ENCODE measurements at regions of chr18 and their contacts with region 1.

Region 1: DNA sequence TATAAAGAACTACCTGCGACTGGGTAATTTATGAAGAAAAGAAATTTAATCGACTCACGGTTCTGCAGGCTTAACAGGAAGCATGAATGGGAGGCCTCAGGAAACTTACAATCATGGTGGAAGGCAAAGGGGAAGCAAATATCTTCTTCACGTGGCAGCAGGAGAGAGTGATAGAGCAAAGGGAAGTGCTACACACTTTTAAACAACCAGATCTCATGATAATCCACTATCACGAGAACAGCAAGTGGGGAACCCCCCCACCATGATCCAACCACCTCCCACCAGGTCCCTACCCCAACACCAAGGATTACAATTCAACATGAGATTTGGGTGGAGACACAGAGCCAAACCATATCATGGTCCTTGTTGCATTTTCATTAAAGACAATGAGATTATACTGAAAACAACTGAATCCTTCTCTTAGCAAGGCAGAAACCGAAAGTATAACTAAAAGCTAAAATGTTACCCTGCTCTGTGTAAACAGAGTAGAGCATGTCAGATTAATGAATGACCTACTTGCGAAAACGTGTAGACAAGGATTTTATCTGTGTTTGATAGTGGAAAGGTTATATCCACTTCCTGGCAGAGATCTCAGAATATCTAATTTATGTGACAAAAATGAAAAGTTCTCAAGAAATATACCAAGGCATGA is 60.1 kb upstream of the RBBP8 start:
- DNase-seq: no peak
- ATAC-seq: no peak
- H3K4me3 ChIP-seq: no peak overlapping the region
- H3K27ac ChIP-seq: no peak overlapping the region
- H3K4me1 ChIP-seq: peaks cover 6 to 10% of the 10 kb centered on the region in 2 experiments; a peak in 1 of 4 replicates
- H3K27me3 ChIP-seq: no peaks in the 10 kb centered on the region
- CTCF ChIP-seq: no peak
- POLR2A ChIP-seq: no peak
- RAD21 ChIP-seq: no peak

Region 2: DNA sequence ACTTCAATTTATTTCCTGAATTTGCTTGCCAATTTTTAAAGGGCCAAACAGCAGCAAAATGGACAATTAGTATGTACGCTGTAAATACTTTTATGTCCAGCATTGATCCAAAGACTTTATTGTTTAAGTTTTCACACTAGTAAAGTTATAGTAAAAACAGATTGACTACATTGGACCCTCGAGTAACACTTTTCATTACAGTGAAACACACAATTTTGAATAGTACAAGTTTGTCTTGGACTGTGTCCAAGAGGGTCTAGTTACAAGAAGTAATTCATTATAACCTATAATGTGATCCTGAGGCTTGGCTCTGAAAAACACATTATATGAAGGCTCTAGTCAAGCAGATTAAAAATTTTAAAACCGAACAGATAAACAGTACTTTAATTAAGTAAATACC is 48.7 kb after region 1 on chr18:
- CTCF ChIA-PET with region 1: no interaction called
- POLR2A ChIA-PET with region 1: no interaction called
- RAD21 ChIA-PET with region 1: no interaction called
- intact Hi-C with region 1: loop called (anchors 10 kb)
- DNase-seq: no peak
- ATAC-seq: no peak
- H3K4me3 ChIP-seq: no peak overlapping the region
- H3K27ac ChIP-seq: no peak overlapping the region
- H3K4me1 ChIP-seq: peaks cover 3 to 15% of the 10 kb centered on the region in 2 experiments; a peak in 3 of 4 replicates
- H3K27me3 ChIP-seq: no peaks in the 10 kb centered on the region
- CTCF ChIP-seq: no peak
- POLR2A ChIP-seq: no peak
- RAD21 ChIP-seq: no peak

Measured in HCT116 (cell line).